Head of caudate nucleus (tissue), 42 donors: ENCODE measurements at regions of chr9 and their contacts with region 1.

Region 1: DNA sequence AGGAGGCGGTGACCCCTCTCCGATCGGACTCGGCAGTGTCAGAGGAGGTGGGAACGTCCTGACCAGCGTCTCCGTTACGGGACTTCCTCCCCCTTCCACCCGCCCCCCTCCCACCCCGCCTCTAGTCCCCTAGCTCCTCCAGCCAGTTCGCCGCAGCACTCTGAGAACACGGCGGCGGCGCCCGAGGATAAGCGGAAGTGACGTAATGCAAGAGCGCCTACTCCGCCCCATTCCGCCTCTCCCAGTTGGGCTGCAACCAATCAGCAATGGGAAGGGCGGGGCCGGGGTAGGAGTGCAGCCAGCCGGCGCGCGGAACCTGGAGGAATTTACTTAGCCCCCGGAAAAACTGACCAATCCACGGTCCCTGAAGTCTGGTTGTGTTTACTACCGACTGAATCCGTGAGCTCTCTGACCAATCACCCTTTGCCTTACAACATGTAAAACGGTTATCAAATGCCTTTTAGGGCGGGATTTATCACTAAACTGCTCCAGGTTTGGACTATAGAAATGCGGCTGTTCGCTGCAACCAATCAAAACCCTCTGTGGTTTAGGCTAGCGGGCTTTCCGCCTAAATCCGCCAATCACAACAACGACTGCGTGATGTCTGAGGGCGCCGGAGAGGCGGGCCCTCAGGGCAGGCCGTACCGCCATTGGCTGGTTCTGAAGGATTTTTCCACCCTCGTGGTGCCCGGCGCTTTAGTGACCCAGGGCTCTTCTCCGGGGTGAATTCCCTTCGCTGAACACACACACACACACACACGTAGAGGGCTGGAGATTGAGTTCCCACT is at the start of gene ZBTB5:
- DNase-seq: peak; percentile 99 to 100 (median 100)

Region 2: GRCh38 chr9:37422289-37423104 is 42.9 kb before region 1 on chr9 and contains the start of gene GRHPR:
- intact Hi-C with region 1: loop called (anchors 2 kb)
- DNase-seq: peak; percentile 88 to 98 (median 96)